Thyroid gland (tissue), 4 donors: ENCODE measurements at regions of chr7 and their contacts with region 1.

Region 1: DNA sequence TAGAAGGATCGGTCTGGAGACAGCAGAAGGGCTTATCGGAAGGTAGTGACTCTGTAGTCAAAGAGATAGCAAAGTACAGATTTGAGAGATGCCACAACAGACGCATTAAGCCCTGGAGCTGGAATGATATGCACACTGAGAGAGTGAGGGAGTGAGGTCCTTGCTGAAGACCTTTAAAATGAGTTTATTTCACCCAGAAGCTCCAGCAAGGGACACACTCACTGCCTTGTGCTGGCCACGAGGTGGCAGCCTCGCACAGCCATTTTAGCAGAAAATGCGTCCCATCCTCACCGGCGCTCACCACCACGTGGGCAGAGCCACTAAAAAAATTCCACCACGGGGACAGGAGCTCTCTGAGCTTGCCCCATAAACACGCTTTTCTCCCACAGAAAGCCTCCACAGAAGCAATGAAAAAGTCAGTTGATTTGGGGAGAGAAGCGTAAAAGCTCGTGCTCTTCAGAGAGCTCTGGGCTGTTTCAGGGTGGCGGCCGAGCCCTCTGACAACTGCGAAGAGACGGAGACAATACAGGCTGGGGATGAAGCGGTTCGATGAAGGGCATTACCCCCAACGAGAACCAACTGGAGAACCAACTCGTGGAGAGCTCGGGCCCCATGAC is 163.0 kb upstream of the KLF14 start:
- DNase-seq: peak; percentile 86 to 91
- H3K4me3 ChIP-seq: no peak overlapping the region
- H3K27ac ChIP-seq: peak overlapping the region; percentile 99 to 100 (median 100)
- H3K4me1 ChIP-seq: peaks cover 77 to 96% of the 10 kb centered on the region in 2 donors
- H3K27me3 ChIP-seq: no peaks in the 10 kb centered on the region
- CTCF ChIP-seq: peak; percentile 78 to 97 (median 87)
- POLR2A ChIP-seq: peak in 1 of 2 donors; percentile 79

Region 2: DNA sequence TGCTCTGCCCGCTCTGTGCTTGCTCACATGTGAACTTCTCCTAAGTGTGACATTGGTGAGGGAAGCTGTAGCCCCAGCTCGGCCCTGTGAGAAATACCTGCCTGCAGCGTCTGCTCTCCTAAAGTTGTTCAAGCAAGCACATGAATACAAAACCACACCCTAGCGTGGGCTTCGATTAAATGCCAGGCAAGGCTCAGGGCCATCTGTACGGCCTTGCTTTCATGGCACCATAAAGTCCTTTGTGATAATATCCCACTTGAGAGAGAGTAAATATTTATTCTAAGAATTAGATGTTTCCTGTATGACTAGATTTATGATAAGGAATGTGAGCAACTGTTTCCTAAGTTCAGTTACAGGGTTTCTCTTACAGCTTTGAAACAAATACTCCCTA is 99.8 kb after region 1 on chr7:
- intact Hi-C with region 1: loop called (anchors 10 kb)
- DNase-seq: peak; percentile 92 to 93
- H3K4me3 ChIP-seq: no peak overlapping the region
- H3K27ac ChIP-seq: peak overlapping the region; percentile 45 to 84 (median 77)
- H3K4me1 ChIP-seq: peaks cover 81 to 83% of the 10 kb centered on the region in 2 donors
- H3K27me3 ChIP-seq: no peaks in the 10 kb centered on the region
- CTCF ChIP-seq: no peak
- POLR2A ChIP-seq: peak in 1 of 2 donors; percentile 67

Region 3: GRCh38 chr7:131513245-131514061 is 616.4 kb after region 1 on chr7:
- intact Hi-C with region 1: loop called (anchors 10 kb)
- DNase-seq: peak; percentile 87 to 93
- H3K4me3 ChIP-seq: no peak overlapping the region
- H3K27ac ChIP-seq: peak overlapping the region in 2 of 3 donors; percentile 37 to 52
- H3K4me1 ChIP-seq: peaks cover 12 to 30% of the 10 kb centered on the region in 2 donors
- H3K27me3 ChIP-seq: no peaks in the 10 kb centered on the region
- CTCF ChIP-seq: peak; percentile 82 to 94 (median 89)
- POLR2A ChIP-seq: no peak